ENCODE measurements at regions of chr14 and their contacts with region 1.

Region 1: DNA sequence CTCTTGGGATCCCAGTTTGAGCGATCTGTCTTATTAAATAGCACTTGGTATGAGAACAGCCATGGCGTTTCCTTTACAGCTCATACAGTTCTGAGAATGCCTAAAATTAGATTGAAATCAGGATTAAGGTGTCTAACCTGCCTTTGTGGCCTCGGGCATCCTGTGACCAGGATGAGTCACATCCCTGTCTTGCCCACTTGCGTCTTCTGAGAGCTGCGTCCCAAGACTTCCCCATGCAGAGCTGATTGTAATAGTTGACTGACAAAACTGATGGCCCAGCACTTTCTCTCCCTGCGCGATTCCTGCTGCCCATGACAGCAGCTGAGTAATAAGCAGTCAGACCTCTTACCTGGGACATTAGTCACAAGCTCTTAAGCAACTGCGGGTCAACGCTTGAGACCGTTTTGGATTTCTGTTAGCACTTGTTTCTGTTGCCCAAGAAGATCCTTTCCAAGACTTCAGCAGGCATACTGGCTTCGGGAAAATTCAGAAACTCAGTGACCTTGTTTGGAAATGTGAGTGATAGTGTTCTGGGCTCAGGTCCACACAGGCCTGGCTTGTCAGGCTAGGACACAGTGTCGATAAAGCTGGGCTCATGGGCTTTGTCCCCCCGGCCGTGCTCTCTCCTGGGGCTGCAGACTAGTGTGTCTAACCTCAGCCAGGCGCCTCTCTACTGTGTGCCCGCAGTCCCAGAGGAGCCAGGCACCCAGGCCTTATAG is 169.9 kb upstream of the HIF1A start:
- DNase-seq: peak; percentile 100
- ATAC-seq: peak; percentile 73
- H3K4me3 ChIP-seq: peak overlapping the region; percentile 27; the same call in 1 of the 2 replicates
- H3K27ac ChIP-seq: peak overlapping the region; percentile 95
- H3K4me1 ChIP-seq: peaks cover 66% of the 10 kb centered on the region
- H3K27me3 ChIP-seq: no peaks in the 10 kb centered on the region
- CTCF ChIP-seq: no peak

Region 2: DNA sequence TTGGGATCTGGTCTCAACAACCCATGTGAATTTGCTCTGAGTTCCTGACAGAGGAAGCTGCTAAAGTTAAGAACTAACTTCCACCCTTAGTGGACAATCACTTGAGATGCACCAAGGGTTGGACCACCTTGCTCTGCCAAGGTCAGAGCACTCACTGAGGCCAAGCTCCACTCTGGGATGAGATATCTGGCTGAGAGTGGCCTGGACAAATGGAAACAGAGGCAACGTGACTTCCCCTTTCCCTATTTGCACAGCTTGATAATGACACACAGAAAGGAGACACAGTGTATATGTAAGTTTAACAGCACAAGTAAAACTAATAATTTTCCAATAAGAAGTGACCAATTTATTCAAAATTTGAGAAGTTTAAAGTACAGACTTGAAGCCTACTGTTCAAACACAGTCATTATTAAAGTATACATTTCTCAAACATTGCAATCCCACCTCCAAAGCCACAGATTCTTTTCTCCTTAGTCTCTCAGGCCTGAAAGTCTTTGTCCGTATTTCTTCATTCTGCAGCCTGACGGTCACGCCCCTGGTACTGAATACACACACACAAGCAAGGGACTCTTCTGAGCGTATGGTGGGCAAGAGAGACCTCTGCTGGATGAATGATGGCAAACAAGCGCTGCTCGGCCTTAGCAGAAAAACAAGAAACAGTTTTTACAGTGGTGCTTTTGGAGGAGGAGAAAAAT is 272.9 kb before region 1 on chr14:
- CTCF ChIA-PET with region 1: no interaction called
- POLR2A ChIA-PET with region 1: no interaction called
- intact Hi-C with region 1: no loop called
- DNase-seq: peak; percentile 98
- ATAC-seq: peak; percentile 93
- H3K4me3 ChIP-seq: 0 out of 2 replicates have a peak overlapping the region, but pooled peaks have one; percentile 5
- H3K27ac ChIP-seq: peak overlapping the region; percentile 80
- H3K4me1 ChIP-seq: peaks cover 27% of the 10 kb centered on the region
- H3K27me3 ChIP-seq: no peaks in the 10 kb centered on the region
- CTCF ChIP-seq: peak; percentile 99

Region 3: DNA sequence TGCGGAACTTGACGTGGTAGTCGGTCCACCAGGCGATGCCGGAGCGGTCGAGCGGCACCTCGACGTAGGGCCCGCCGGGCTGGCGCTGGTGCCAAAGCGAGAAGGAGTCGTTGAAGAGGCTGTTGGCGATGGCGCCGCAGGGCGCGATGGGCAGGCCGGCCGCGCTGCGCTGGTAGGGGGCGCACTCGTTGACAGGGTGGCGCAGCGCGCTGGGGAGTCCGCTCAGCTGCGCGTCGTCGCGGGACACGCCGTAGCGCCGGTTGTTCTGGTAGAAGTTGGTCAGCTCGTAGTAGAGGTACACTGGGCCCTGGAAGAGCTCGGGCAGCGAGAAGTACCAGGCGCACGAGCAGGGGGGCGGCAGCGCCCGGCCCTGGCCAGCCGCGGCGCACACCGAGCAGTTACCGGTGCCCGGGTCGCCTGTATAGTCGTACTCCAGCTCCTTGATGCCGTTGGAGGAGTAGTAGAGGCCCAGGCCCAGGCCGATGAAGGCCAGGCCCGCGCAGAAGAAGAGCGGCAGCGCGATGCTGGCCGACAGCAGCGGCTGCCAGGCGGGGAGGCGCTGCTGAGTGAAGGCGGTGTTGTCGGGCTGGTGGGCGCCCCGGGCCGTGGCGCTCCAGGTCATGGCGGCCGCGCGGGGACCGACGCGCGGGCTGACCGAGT is 244.8 kb before region 1 on chr14:
- CTCF ChIA-PET with region 1: no interaction called
- POLR2A ChIA-PET with region 1: interaction called, 13 read pairs
- intact Hi-C with region 1: no loop called
- DNase-seq: peak; percentile 84
- ATAC-seq: peak; percentile 55
- H3K4me3 ChIP-seq: peak overlapping the region; percentile 85
- H3K27ac ChIP-seq: peak overlapping the region; percentile 82
- H3K4me1 ChIP-seq: peaks cover 58% of the 10 kb centered on the region
- H3K27me3 ChIP-seq: no peaks in the 10 kb centered on the region
- CTCF ChIP-seq: peak; percentile 89

Region 4: DNA sequence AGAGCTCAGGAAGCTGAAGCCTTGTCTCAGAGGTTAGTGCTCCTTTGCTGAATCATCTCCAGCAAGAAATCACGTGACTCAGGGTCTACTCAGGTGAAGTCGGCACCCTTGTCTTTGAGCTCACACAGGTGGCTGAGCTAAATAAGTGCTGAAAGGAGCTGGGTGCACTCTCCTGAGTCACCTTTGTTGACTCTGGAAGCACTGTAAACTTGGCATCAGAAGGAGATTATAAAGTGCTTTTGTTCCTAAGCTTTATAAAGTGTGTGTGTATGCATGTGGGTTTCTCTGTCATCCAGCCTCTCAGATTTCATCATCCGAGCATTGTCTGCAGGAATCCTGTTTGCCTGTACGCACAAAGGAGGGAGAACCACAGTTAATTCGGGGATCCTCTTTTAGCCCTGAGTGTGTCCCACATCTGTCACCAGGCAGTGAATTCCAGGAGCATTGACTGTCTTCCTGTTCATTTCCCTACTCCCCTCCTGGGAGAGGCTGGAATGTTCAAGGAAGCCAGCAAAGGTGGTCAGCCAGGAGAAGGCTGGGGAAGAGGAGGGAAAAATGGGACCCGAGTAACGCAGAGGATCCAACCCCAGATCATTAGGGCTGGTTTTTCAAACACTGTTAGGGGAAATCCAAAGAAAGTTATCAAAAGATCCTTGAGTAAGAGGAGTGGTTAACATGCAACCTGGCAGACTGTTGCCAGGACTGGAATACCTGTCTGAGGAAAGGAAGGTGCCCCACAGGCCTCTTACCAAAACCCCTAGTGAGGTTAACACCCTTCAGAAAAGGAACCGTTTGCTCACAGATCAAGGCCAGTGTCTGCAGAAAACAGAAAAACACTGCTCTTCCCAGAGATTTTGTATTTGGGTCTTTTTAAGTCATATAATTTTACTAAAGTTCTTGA is 12.4 kb after region 1 on chr14:
- CTCF ChIA-PET with region 1: interaction called, 10 read pairs
- POLR2A ChIA-PET with region 1: interaction called, 13 read pairs
- intact Hi-C with region 1: loop called (anchors 1 kb)
- DNase-seq: peak; percentile 100
- ATAC-seq: peak; percentile 94
- H3K4me3 ChIP-seq: peak overlapping the region; percentile 8; the same call in 1 of the 2 replicates
- H3K27ac ChIP-seq: peak overlapping the region; percentile 90
- H3K4me1 ChIP-seq: peaks cover 58% of the 10 kb centered on the region
- H3K27me3 ChIP-seq: no peaks in the 10 kb centered on the region
- CTCF ChIP-seq: no peak

Region 5: DNA sequence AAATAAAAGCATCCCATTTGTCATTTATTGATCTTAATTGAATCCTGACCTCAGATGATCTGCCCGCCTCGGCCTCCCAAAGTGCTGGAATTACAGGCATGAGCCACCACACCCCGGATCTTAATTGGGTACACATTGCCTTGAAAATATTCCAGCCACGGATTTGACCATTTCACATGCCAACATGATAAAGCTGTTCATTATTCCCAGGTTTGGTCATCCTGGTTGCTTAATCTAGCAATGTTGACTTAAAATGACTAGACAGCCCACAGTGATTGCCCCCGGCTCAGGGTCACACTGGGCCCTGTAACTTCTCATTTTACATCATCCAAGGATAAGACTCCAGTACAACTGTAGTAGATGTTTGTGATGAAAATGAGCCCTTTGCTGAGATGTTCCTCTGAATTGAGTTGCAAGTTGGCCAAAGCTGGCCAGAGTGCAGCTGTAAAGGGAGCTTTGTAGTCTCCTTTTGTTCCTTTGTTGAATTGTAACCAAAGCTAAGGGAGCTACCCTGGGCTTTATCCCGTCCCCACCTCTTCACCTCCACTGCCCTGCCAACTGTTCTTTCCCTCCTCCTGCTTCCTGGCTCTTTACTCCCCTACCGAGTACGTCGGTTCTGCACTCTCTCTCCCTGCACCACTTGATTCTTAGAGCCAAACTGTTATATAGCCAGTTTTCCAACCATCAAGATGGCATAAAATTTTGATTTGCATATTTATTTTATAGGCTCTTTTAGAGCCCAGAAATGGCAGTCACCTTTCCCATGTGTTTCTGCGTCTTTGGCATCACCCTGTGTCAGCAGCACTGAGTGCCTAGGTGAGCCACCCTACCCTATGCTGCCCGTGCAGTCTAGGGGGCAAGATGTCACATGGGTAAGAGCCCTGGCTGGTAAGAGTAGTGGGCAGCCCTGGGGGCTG is 28.5 kb after region 1 on chr14:
- CTCF ChIA-PET with region 1: interaction called, 5 read pairs
- POLR2A ChIA-PET with region 1: interaction called, 7 read pairs
- intact Hi-C with region 1: loop called (anchors 1 kb)
- DNase-seq: peak; percentile 100
- ATAC-seq: peak; percentile 92
- H3K4me3 ChIP-seq: no peak overlapping the region; the same call in 1 of the 2 replicates
- H3K27ac ChIP-seq: peak overlapping the region; percentile 95
- H3K4me1 ChIP-seq: peaks cover 65% of the 10 kb centered on the region
- H3K27me3 ChIP-seq: no peaks in the 10 kb centered on the region
- CTCF ChIP-seq: no peak